ENCODE measurements at regions of chr5 and their contacts with region 1.

Region 1: DNA sequence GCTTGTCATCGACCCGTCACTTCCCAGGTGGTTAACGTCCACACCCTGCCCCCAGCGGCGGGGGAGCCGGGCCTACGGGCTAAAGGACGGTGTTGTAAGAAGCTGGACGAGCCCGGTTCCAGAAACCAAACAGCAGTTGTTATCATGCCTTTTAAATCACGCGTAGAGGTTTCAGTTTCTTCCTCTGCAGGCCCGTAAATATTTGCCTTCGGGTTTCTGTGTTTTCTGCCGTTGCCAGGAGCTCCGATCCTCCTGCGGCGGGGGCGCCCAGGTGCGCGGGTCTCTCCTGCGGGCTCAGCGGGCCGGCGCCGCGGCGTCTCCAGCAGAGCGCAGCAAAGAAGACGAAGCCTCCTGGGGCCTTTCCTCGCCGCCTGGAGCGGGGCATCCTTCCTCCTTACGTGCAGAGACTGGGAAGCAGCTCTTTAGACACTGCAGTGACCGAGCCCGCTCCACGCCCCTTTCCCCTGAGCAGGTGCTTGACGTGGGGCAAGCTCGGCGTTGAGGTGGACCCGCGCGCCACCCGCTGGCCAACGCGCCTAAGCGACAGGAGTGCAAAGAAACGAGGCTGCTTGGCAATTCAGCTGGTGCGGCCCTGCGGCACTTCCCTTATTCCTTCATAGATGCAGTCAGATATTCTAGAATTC is 21.8 kb upstream of the TTC1 start:
- DNase-seq: peak; percentile 85 to 94
- H3K4me3 ChIP-seq: peak overlapping the region; percentile 65; the same call in 1 of the 2 replicates
- H3K27ac ChIP-seq: peak overlapping the region; percentile 55
- H3K4me1 ChIP-seq: peaks cover 13% of the 10 kb centered on the region
- H3K27me3 ChIP-seq: no peaks in the 10 kb centered on the region
- CTCF ChIP-seq: peak; percentile 90

Region 2: DNA sequence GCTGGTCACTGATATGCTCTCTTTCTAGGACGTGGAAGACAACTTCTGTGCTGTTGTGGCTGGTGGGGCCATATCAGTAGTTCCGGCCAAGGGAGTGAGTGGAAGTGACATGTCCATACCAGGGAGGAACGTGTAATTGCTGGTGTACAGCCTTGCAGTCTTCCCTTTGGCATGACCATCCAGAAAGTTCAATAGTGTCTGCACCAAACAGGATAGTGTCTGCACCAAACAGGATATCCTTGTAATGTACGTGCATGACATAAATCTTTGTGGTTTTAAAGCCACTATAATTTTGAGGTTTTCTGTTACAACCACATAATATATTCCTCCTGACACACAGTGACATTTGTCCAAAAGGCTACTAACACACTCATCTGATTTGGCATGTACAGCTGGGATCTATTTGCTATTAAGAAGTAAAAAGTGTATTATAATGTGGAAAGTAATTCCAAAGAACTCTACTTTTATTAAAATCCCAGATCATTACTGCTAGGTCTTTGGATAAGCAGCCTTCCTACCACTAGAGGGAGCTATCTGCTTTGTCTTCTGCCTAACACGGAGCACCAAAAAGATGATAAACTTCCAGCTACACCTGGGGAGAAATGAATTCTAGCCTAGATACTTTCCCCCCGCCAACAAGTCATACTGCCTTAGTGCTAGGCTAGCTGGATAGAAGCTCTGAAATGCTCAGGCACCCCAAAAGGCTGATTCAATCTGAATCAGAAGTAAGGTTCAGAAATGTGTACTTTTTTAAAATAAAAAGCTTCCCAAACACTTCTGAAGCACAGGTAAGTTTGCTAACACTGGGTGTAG is 830.5 kb before region 1 on chr5:
- CTCF ChIA-PET with region 1: interaction called, 5 read pairs
- POLR2A ChIA-PET with region 1: no interaction called
- intact Hi-C with region 1: loop called (anchors 2 kb)
- DNase-seq: peak; percentile 38 to 42
- H3K4me3 ChIP-seq: no peak overlapping the region
- H3K27ac ChIP-seq: peak overlapping the region; percentile 25; the same call in 1 of the 2 replicates
- H3K4me1 ChIP-seq: no peaks in the 10 kb centered on the region
- H3K27me3 ChIP-seq: no peaks in the 10 kb centered on the region
- CTCF ChIP-seq: peak; percentile 92

Region 3: DNA sequence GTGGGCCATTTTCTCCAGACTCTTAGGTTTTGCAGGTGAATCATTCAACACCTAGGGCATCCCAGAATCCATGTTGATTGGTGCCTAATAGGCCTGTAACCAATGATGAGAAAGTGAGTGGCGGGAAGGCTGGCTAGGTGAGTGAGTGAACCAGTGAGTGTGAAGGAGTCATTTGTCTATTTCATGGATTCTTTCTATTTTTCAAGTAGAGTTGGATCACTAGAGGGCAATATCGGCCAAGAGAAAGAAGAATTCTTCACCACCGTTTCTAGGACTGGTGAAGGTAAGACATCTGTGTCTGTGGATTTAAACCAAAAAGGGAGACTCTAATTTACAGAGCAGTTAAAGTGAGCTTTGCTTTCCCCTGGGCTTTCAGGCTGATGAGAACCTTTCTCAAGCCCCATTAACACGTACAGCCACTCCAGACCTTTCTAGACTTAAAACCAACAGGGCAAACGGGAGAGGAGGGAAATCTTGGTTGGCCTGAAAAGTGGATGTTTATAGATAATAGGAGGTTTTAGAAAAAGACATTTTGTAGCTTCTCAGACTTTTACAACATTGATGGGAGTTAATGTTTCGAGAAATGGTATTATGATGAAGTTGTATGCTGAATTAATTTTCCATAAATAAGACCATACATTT is 542.6 kb before region 1 on chr5:
- CTCF ChIA-PET with region 1: interaction called, 15 read pairs
- POLR2A ChIA-PET with region 1: no interaction called
- intact Hi-C with region 1: loop called (anchors 1 kb)
- DNase-seq: peak; percentile 38 to 65
- H3K4me3 ChIP-seq: no peak overlapping the region
- H3K27ac ChIP-seq: no peak overlapping the region
- H3K4me1 ChIP-seq: peaks cover 9% of the 10 kb centered on the region
- H3K27me3 ChIP-seq: no peaks in the 10 kb centered on the region
- CTCF ChIP-seq: peak; percentile 74

Region 4: DNA sequence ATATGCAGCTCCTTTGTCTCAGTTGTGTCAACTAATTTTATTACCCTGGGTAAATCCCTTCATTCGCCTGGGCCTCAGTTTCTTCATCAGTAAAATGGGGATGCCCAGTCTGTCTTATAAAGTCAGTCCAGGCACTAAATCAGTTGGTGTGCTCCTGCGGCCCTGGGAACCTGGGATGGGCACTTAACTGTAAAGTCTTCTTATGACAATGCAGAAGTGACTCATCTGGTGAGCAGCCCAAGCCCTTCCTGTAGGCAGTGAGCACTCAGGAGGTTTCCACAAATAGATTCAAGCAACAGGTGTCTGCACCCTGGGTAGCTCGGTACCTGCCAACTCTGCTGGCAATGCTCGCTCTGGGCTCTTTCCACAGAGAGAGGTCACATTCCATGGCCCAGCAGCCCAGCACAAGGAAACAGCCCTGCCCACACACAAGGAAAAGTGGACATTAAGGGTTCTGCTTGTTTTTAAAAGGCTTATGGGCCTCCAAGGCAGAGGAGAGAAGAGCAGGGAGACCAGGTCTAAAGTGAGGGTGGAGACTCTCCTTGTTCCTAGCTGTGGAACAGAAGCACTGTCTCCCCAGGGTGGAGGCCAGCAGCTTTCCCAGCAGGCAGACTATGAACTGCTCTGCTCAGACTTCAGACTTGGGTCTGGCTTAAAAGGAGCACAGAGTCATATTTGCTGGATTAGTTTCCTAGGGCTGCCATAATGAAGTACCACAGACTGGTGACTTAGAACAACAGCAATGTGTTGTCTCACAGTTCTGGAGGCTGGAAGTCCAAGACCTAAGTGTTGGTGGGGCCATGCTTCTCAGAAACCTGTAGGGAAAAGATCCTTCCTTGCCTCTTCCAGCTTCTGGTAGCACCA is 160.6 kb before region 1 on chr5:
- CTCF ChIA-PET with region 1: no interaction called
- POLR2A ChIA-PET with region 1: no interaction called
- intact Hi-C with region 1: loop called (anchors 2 kb)
- DNase-seq: peak; percentile 84 to 99
- H3K4me3 ChIP-seq: no peak overlapping the region
- H3K27ac ChIP-seq: peak overlapping the region; percentile 99
- H3K4me1 ChIP-seq: peaks cover 64% of the 10 kb centered on the region
- H3K27me3 ChIP-seq: no peaks in the 10 kb centered on the region
- CTCF ChIP-seq: no peak

Region 5: GRCh38 chr5:159899067-159900049 is 87.8 kb before region 1 on chr5:
- CTCF ChIA-PET with region 1: no interaction called
- POLR2A ChIA-PET with region 1: no interaction called
- intact Hi-C with region 1: no loop called
- DNase-seq: peak in 1 of 2 experiments; percentile 53
- H3K4me3 ChIP-seq: no peak overlapping the region
- H3K27ac ChIP-seq: no peak overlapping the region
- H3K4me1 ChIP-seq: peaks cover 42% of the 10 kb centered on the region
- H3K27me3 ChIP-seq: no peaks in the 10 kb centered on the region
- CTCF ChIP-seq: no peak

Region 6: GRCh38 chr5:160423132-160423531 is 436.0 kb after region 1 on chr5:
- CTCF ChIA-PET with region 1: no interaction called
- POLR2A ChIA-PET with region 1: no interaction called
- intact Hi-C with region 1: no loop called
- DNase-seq: no peak
- H3K4me3 ChIP-seq: peak overlapping the region; percentile 80; the same call in 1 of the 2 replicates
- H3K27ac ChIP-seq: no peak overlapping the region
- H3K4me1 ChIP-seq: peaks cover 44% of the 10 kb centered on the region
- H3K27me3 ChIP-seq: no peaks in the 10 kb centered on the region
- CTCF ChIP-seq: no peak